Right ventricle myocardium inferior (tissue), 1 donor: ENCODE measurements at regions of chr17 and their contacts with region 1.

Region 1: DNA sequence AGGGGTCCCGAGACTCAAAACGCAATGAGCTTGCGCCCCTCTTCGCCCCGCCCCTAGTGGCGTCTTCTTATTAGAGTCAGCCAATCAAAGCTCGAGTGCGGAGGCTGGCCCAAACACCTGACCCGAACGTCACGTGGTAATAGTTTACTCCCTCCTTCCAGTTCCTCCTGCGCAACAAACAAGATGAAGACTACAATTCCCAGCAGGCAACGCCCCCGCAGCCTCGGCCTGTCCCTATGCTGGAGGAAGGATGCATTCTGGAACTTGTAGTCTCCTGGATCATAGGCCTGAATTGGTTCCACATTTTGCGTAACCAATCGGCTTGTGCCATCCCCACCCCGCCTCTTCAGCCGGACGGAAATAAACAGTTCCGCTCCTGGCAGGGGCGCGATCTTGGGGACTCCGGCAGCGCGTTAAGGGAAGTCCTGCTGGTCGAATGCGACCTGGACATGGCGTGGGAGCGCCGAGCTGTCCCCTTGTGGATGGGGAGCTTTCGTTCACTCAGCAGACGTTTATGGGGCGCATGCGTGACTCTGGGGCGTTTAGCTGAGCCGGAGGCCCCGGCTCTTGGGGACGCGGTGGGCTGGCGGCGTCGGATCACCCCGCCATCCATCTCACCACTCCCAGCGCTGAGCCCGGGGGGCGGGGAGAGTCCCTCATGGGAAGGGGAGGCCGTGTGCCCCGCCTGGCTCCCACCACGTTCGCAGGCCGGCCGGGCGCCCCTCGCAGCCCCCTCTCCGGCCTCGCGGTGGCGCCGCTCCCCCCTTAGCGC is at the start of gene WBP2:
- DNase-seq: peak; percentile 98
- ATAC-seq: peak; percentile 95
- total RNA-seq, gene WBP2: 151 TPM

Region 2: GRCh38 chr17:75784473-75785015 is 71.0 kb before region 1 on chr17 and contains the start of gene UNK:
- intact Hi-C with region 1: loop called (anchors 2 kb)
- DNase-seq: peak; percentile 98
- ATAC-seq: peak; percentile 95
- total RNA-seq, gene UNK: 16.0 TPM

Region 3: DNA sequence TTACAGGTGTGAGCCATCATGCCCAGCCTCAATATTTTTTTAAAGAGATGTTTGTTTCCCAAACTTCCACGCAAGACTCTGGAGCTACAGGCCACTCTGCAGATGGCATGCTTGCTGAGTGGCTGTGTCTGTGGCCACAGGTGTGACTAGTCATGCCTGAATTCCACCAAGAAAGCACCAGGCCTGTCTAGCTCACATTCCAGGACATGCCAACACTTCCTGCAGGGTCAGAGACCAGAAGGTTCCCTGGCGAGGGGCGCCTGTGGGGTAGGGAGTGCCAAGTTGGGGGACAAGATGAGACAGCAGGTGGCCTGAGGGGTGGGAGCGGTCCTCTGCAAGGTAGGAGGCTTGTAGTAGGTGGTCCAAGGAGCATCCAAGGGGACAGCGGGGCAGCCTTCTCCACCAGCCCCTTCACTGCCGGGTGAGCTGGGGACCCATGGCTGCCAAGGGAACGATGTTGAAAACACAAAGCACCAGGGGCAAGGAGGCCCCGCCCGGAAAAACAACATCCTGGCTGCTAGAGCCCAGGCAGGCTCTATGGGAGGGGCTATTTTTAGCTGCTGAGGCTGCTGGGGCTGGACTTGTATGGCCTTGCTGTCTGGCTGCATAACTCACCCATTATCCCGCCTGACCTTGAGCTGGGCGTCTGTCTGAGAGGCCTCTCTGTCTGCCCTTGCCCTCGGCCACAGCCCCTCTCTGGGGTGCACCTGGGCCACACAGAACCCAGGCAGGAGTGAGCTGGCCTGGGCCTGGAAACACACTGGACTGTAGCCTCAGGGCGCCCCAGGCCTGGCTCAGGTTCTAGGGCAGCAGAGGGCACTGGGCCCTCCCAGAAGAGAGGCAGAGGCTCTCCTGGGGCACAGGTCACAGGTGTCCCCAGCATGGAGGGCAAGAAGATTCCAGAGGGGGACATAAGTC is 17.2 kb after region 1 on chr17:
- intact Hi-C with region 1: loop called (anchors 1 kb)
- DNase-seq: peak; percentile 88
- ATAC-seq: peak; percentile 62

Region 4: GRCh38 chr17:75896415-75897159 is 41.1 kb after region 1 on chr17 and contains the start of gene TRIM65:
- intact Hi-C with region 1: loop called (anchors 2 kb)
- DNase-seq: peak; percentile 93
- ATAC-seq: peak; percentile 88
- total RNA-seq, gene TRIM65: 11.3 TPM

Region 5: GRCh38 chr17:76063875-76064546 is 208.5 kb after region 1 on chr17:
- intact Hi-C with region 1: no loop called
- DNase-seq: no peak
- ATAC-seq: no peak

Region 6: DNA sequence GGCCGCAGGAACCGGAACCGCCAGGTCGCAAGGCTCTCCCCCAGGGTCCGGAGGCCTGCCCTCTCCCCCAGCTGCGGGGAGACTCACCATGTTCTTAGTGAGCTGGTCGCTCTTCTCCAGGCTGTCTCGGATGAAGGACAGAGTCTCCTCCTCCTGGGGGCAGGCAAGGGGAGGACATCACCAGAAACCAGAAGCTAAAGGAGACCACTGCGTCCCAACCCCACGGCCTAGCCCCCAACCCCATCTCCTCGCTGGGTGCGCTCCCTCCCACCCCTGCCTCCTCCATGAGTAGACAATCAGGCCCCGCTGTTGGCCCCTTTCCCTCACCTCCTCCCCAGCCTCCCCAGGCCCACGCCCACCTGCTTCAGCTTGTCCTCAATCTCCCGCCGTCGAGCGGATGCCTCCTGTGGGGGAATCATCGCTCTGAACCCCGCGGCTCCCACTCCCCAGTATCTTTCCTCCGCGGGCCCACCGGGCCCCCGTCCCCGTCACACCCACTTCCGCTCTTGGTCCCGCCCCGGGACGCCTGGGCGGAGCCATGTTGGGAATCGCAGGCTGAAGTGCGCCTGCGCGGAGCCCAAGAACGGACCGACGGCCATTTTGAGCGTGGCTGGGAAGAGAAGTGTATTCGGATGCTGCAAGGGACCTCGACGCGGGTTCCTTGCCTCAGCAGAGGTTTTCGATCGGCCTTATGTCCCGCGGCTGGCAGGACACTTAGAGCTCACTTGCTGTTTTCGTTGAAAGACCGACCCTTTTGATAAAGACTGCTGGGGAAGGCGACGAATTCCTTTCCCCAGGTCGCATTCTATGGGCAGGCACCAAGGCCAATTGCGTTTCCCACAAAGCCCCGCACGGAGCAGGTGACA is 248.0 kb after region 1 on chr17 and contains the start of gene EXOC7:
- intact Hi-C with region 1: no loop called
- DNase-seq: peak; percentile 98
- ATAC-seq: peak; percentile 96
- total RNA-seq, gene EXOC7: 70.9 TPM